ENCODE measurements at regions of chrX and their contacts with region 1.

Region 1: DNA sequence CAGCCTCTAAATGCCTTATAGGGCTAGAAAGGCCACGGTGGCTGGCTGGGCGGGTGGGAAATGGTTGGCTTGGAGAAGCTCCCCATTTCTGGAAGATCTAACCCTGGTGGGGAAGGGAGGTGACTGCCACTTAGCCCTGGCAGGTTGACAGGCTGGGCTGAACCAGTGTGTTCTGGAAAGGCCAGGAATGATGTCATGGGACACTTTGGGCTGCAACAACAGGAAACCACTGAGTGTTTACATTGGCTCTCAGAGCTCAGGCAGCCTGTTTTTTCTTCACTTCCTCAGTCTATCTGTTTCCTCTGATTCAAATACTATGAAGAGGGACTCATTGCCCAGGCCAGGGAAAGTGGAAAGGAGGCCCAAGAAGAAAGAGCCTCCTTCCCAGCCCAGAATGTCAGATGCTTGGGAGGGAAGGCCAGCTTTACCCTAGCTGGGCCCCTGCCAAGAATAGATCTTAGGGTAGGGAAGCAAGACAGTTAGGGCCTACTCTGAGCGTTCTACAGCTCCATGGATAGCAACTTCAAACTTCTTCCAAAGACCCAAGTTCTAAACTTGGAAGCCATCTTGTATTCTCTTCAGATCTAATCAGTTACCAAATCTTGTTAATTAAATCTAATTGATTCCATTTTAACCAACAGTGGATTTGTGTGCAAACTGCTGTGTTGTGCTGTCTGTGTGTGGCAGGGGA is 65.8 kb upstream of the MSN start:
- DNase-seq: peak; percentile 81 to 88
- ATAC-seq: peak; percentile 67 to 87 (median 80)
- H3K4me3 ChIP-seq: no peak overlapping the region
- H3K27ac ChIP-seq: peak overlapping the region; percentile 48
- H3K4me1 ChIP-seq: peaks cover 12% of the 10 kb centered on the region
- H3K27me3 ChIP-seq: peaks cover 0 to 3% (median 0%) of the 10 kb centered on the region in 3 donors
- CTCF ChIP-seq: no peak

Region 2: GRCh38 chrX:65266482-65266881 is 335.2 kb before region 1 on chrX:
- intact Hi-C with region 1: no loop called
- DNase-seq: no peak
- ATAC-seq: no peak
- H3K4me3 ChIP-seq: no peak overlapping the region
- H3K27ac ChIP-seq: no peak overlapping the region
- H3K4me1 ChIP-seq: no peaks in the 10 kb centered on the region
- H3K27me3 ChIP-seq: no peaks in the 10 kb centered on the region
- CTCF ChIP-seq: no peak

Region 3: GRCh38 chrX:65551489-65552339 is 50.0 kb before region 1 on chrX:
- intact Hi-C with region 1: no loop called
- DNase-seq: no peak
- ATAC-seq: no peak
- H3K4me3 ChIP-seq: no peak overlapping the region
- H3K27ac ChIP-seq: no peak overlapping the region
- H3K4me1 ChIP-seq: no peaks in the 10 kb centered on the region
- H3K27me3 ChIP-seq: peaks cover 0 to 9% (median 0%) of the 10 kb centered on the region in 3 donors
- CTCF ChIP-seq: no peak

Region 4: GRCh38 chrX:65667503-65668376 is 66.1 kb after region 1 on chrX and contains the start of gene MSN:
- intact Hi-C with region 1: loop called in 1 of 2 experiments (anchors 5 kb)
- DNase-seq: peak; percentile 83 to 87
- ATAC-seq: peak; percentile 87 to 91 (median 90)
- H3K4me3 ChIP-seq: peak within 1 kb of the TSS; percentile 84
- H3K27ac ChIP-seq: peak within 1 kb of the TSS; percentile 91
- H3K4me1 ChIP-seq: peaks cover 18% of the 10 kb centered on the region
- H3K27me3 ChIP-seq: no peaks in the 10 kb centered on the region
- CTCF ChIP-seq: no peak
- total RNA-seq, gene MSN: 66.0 to 101 (median 84.1) TPM

Region 5: DNA sequence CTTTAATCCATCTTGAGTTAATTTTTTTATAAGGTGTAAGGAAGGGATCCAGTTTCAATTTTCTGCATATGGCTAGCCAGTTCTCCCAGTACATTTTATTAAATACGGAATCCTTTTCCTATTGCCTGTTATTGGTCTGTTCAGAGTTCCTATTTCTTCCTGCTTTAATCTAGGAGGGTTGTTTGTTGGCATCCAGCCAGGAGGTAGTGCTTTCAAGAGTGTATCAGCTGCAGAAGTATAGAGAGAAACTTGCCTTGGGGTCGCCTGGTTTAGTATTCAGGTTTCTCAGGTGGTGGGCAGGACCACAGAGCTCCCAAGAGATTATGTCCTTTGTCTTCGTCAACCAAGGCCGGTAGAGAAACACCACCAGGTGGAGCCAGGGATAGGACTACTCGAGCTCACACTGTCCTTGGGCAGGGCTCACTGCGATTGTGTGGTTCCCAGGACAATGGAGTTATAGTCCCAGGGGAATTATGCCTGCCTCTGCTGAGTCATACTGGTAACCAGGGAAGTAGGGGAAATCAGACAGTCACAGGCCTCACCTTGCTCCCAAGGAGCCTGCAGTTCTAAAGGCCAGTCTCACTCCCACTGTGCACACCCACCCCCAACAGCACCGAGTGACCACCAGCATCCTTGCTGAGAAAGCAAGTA is 270.1 kb after region 1 on chrX:
- intact Hi-C with region 1: no loop called
- DNase-seq: no peak
- ATAC-seq: no peak
- H3K4me3 ChIP-seq: no peak overlapping the region
- H3K27ac ChIP-seq: no peak overlapping the region
- H3K4me1 ChIP-seq: no peaks in the 10 kb centered on the region
- H3K27me3 ChIP-seq: peaks cover 0 to 14% (median 0%) of the 10 kb centered on the region in 3 donors
- CTCF ChIP-seq: no peak